ENCODE measurements at regions of chr20 and their contacts with region 1.

Region 1: GRCh38 chr20:46681032-46681854 is 8.0 kb downstream of the TP53RK start:
- DNase-seq: peak; percentile 52
- H3K4me3 ChIP-seq: no peak overlapping the region
- H3K27ac ChIP-seq: no peak overlapping the region
- H3K4me1 ChIP-seq: peaks cover 3% of the 10 kb centered on the region
- H3K27me3 ChIP-seq: no peaks in the 10 kb centered on the region
- CTCF ChIP-seq: peak; percentile 69 to 75
- POLR2A ChIP-seq: no peak

Region 2: DNA sequence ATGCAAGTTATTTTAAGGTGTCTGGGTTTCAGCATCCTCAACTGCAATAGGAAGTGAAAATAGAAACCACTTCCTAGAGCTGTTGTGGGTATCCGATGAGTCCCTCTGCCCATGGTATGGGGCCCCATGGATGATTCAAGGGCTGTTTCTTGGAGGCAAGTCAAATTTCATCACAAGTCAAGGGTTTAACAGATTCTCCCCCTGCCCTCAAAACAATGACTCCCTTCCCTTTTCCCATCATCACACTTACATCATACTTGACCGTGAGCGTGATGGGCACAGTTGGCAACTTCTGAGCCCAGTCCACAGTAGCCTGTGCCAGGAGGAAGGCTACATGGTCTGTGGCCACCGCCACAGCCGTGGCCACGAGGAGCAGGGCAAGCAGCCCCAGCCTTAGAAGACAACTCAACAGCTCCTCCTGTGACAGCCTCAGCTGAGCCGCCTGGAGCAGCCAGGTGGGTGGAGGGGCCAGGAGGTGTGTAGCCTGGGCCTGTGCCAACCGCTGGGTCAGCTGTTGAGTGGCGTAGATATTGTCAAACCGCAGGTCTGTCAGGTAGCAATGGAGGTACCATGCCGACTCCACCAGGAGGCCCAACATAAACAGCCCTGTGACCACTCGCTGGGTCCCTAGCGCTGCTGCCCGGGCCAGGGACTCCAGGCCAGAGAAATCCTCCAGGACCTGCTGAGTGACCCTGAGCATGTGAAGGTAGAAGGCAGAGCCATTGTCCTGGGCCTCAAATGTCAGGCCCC is 136.0 kb before region 1 on chr20:
- CTCF ChIA-PET with region 1: interaction called, 29 read pairs
- POLR2A ChIA-PET with region 1: no interaction called
- dilution Hi-C with region 1: no loop called
- intact Hi-C with region 1: loop called (anchors 1 kb)
- DNase-seq: no peak
- H3K4me3 ChIP-seq: no peak overlapping the region
- H3K27ac ChIP-seq: no peak overlapping the region
- H3K4me1 ChIP-seq: no peaks in the 10 kb centered on the region
- H3K27me3 ChIP-seq: no peaks in the 10 kb centered on the region
- CTCF ChIP-seq: no peak
- POLR2A ChIP-seq: no peak